T-cell (primary cell): ENCODE measurements at regions of chrX and their contacts with region 1.

Region 1: GRCh38 chrX:111098874-111099273 is 2.9 kb downstream of the PAK3 start:
- DNase-seq: peak; percentile 29 to 76 (median 53)
- ATAC-seq: peak; percentile 50 to 74 (median 62)
- H3K4me3 ChIP-seq: no peak overlapping the region
- H3K4me3 Mint-ChIP-seq: peak overlapping the region; percentile 26 to 60 (median 41)
- H3K27ac ChIP-seq: peak overlapping the region; percentile 29
- H3K27ac Mint-ChIP-seq: peak overlapping the region; percentile 71 to 78
- H3K4me1 ChIP-seq: peaks cover 0 to 23% of the 10 kb centered on the region in 2 experiments
- H3K4me1 Mint-ChIP-seq: peaks cover 13 to 31% (median 20%) of the 10 kb centered on the region in 3 donors
- H3K27me3 ChIP-seq: peaks cover 4% of the 10 kb centered on the region in 2 experiments
- H3K27me3 Mint-ChIP-seq: peaks cover 9 to 30% of the 10 kb centered on the region in 2 donors

Region 2: GRCh38 chrX:111040377-111041017 is 58.4 kb before region 1 on chrX:
- CTCF ChIA-PET with region 1: interaction called in 1 of 2 experiments, 17 read pairs
- POLR2A ChIA-PET with region 1: no interaction called
- DNase-seq: peak in 1 of 35 experiments; percentile 5
- ATAC-seq: no peak
- H3K4me3 ChIP-seq: no peak overlapping the region
- H3K4me3 Mint-ChIP-seq: peak overlapping the region in 1 of 3 donors; percentile 22
- H3K27ac ChIP-seq: peak overlapping the region; percentile 53
- H3K27ac Mint-ChIP-seq: no peak overlapping the region
- H3K4me1 ChIP-seq: peaks cover 0 to 3% of the 10 kb centered on the region in 2 experiments
- H3K4me1 Mint-ChIP-seq: peaks cover 3 to 13% (median 5%) of the 10 kb centered on the region in 3 donors
- H3K27me3 ChIP-seq: no peaks in the 10 kb centered on the region
- H3K27me3 Mint-ChIP-seq: peaks cover 0 to 4% of the 10 kb centered on the region in 2 donors